Endothelial cell of umbilical vein (primary cell): ENCODE measurements at regions of chr6 and their contacts with region 1.

Region 1: GRCh38 chr6:27662769-27663168 is 189.9 kb upstream of the ZNF184 start:
- DNase-seq: no peak
- H3K4me3 ChIP-seq: no peak overlapping the region
- H3K27ac ChIP-seq: no peak overlapping the region
- H3K4me1 ChIP-seq: peaks cover 3% of the 10 kb centered on the region
- H3K27me3 ChIP-seq: peaks cover 10 to 13% of the 10 kb centered on the region in 2 experiments
- CTCF ChIP-seq: no peak
- POLR2A ChIP-seq: no peak

Region 2: DNA sequence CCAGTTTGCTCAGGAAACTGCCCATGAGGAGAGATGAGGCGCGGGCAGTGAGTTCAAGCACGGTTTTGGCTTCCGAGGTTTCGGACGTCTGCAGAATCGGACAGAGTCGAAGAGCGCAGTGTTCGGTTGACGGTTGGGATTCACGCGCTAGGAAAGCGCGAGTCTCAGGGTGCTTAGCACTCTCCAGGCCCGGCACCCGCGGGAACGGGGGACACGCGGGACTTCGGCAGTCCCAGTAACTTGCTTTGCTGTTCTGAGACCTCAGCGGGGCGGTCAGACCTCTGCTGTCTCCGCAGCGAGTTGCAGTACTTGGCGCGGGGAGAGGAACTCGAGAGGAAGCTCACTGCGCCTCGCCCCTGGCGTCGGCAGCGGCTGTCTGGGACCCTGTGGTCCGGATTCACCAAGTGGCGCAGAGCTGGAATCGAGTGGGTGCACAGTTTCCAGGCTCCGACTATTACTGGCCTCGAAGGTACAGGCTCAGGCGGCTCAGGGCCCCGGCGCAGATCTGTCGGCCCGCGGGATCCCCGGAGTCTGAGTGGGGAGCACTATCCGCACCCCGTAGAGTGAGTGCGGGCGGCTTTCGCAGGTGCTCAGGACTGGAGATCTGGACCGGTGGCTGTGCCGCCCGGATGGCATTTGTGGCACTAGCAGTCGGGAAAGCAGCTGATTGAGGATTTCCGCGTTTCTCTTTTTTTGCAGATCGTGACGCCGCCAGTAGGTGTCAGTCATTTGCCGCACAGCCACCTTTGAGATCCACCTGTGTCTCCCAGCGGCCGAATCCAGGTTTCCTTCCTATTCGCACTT is 350.4 kb before region 1 on chr6 and contains the start of gene POM121L2:
- CTCF ChIA-PET with region 1: no interaction called
- POLR2A ChIA-PET with region 1: no interaction called
- dilution Hi-C with region 1: no loop called
- intact Hi-C with region 1: no loop called
- DNase-seq: peak; percentile 65
- H3K4me3 ChIP-seq: peak within 1 kb of the TSS; percentile 41 to 60 (median 51)
- H3K27ac ChIP-seq: no peak within 1 kb of the TSS
- H3K4me1 ChIP-seq: peaks cover 9% of the 10 kb centered on the region
- H3K27me3 ChIP-seq: peaks cover 14 to 20% of the 10 kb centered on the region in 2 experiments
- CTCF ChIP-seq: peak; percentile 50 to 69
- POLR2A ChIP-seq: no peak
- total RNA-seq, gene POM121L2: not detected in 2 replicates

Region 3: GRCh38 chr6:27650620-27651370 is 12.0 kb before region 1 on chr6:
- CTCF ChIA-PET with region 1: no interaction called
- POLR2A ChIA-PET with region 1: interaction called, 10 read pairs
- dilution Hi-C with region 1: no loop called
- intact Hi-C with region 1: no loop called
- DNase-seq: peak; percentile 22
- H3K4me3 ChIP-seq: no peak overlapping the region
- H3K27ac ChIP-seq: no peak overlapping the region
- H3K4me1 ChIP-seq: no peaks in the 10 kb centered on the region
- H3K27me3 ChIP-seq: peaks cover 0 to 2% of the 10 kb centered on the region in 2 experiments
- CTCF ChIP-seq: peak in 1 of 2 donors; percentile 17
- POLR2A ChIP-seq: no peak